AG04449 (cell line): ENCODE measurements at regions of chr18 and their contacts with region 1.

Region 1: DNA sequence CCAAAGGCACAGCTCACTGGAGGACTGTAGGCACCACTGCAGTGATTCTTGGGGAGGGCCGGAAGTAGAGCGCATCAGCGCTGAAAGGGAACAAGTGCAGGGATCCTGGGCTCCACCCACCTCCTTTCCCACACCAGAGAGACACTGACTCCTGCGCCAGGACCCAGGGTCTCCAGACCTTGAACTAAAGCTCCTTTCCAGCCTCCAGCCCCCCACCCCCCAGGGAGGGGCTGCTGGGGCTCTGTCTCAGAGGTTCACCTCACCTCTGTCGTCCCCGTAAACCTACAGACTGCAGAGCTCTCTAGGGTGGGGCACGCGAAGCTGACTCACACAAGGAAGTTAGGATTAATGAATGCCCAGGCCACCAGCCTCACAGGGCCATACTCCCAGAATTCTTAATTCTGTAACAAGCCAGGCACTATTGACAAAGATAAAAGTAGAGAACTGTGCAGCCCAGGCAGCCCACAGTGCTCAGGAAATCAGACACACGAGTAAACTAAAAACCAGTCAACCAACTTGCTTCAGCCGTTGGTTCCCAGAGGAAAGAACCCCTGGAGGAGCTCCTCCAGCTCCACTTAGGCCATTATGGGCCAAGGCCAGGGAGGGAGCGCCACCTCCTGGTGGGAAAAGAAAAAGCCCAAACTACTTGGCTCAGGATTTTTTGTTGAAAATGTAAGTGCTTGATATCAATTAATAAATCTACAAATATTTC is 45.1 kb upstream of the ACAA2 start:
- DNase-seq: no peak
- H3K4me3 ChIP-seq: no peak overlapping the region
- CTCF ChIP-seq: peak; percentile 81

Region 2: DNA sequence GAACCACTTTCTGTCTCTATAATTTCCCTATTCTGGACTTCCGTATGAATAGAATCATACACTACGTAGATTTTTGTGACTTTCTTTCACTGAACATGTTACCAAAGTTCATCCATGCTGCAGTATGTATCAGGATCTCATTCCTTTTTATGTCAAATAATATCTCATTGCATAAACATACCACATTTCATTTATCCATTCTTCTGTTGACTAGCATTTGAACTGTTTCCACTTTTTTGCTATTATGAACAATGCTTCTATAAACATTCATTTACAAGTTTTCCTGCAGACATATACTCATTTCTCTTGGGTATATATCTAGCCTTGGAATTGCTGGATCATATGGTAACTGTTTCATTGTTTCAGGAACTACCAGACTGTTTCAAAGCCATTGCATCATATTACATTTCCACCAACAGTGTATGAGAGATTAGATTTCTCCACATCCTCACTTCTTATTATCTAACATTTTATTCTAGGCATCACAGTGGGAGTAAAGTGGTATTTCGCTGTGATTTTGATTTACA is 584.2 kb before region 1 on chr18:
- CTCF ChIA-PET with region 1: no interaction called
- POLR2A ChIA-PET with region 1: no interaction called
- DNase-seq: no peak
- H3K4me3 ChIP-seq: no peak overlapping the region
- CTCF ChIP-seq: no peak

Region 3: GRCh38 chr18:49464718-49465598 is 393.5 kb before region 1 on chr18:
- CTCF ChIA-PET with region 1: interaction called, 11 read pairs
- POLR2A ChIA-PET with region 1: no interaction called
- DNase-seq: peak; percentile 23
- H3K4me3 ChIP-seq: no peak overlapping the region
- CTCF ChIP-seq: no peak

Region 4: GRCh38 chr18:49520661-49521145 is 337.8 kb before region 1 on chr18:
- CTCF ChIA-PET with region 1: interaction called, 349 read pairs
- POLR2A ChIA-PET with region 1: no interaction called
- DNase-seq: no peak
- H3K4me3 ChIP-seq: no peak overlapping the region
- CTCF ChIP-seq: no peak

Region 5: DNA sequence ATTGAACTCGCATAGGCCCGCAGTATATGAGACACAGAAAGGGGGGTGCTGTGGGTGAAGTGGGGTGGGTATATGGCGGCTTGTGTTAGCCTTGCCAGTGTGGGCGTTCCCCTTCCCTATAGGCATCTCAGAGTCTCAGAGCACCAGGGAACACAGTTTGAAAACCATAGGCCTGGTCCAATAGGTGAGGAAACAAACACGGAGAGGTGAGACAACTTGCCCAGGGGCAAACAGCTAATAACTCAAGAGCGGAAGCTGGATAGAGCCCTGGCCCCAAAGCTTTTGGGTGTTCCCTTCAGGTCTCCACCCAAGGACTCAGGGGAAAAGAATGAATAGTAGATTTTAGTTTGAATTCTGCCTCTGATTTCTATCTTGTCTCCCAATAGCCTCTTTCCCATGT is 288.7 kb before region 1 on chr18:
- CTCF ChIA-PET with region 1: interaction called, 241 read pairs
- POLR2A ChIA-PET with region 1: no interaction called
- DNase-seq: no peak
- H3K4me3 ChIP-seq: no peak overlapping the region
- CTCF ChIP-seq: no peak

Region 6: GRCh38 chr18:49795612-49796552 is 62.6 kb before region 1 on chr18:
- CTCF ChIA-PET with region 1: interaction called, 12 read pairs
- POLR2A ChIA-PET with region 1: no interaction called
- DNase-seq: no peak
- H3K4me3 ChIP-seq: no peak overlapping the region
- CTCF ChIP-seq: no peak

Region 7: GRCh38 chr18:49869354-49869753 is 10.9 kb after region 1 on chr18:
- CTCF ChIA-PET with region 1: interaction called, 22 read pairs
- POLR2A ChIA-PET with region 1: no interaction called
- DNase-seq: no peak
- H3K4me3 ChIP-seq: no peak overlapping the region
- CTCF ChIP-seq: no peak

Region 8: DNA sequence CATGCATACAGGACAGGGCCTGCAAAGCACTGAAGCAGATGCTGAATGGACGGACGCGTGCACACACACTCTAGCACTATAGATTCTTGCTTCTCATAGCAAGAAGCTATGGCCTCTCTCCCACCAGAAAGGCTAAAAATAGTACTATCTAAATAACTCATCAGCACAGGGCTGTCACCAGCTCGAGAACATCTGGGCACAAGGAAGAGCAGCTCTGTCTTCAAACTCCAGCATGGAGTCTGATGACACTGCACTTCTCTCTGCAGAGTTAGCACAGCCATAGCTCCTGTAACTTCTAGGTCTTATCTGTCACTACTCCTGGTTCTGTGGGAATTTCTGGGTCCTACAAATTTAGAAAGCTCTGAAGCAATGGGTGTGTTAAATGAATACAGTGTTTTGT is 212.9 kb after region 1 on chr18:
- CTCF ChIA-PET with region 1: no interaction called
- POLR2A ChIA-PET with region 1: no interaction called
- DNase-seq: no peak
- H3K4me3 ChIP-seq: no peak overlapping the region
- CTCF ChIP-seq: no peak